ENCODE measurements at regions of chr5 and their contacts with region 1.

Region 1: GRCh38 chr5:38968665-38969064 is 105.5 kb downstream of the RICTOR start:
- DNase-seq: no peak
- ATAC-seq: no peak
- H3K4me3 ChIP-seq: no peak overlapping the region
- H3K27ac ChIP-seq: no peak overlapping the region
- H3K4me1 ChIP-seq: no peaks in the 10 kb centered on the region
- H3K27me3 ChIP-seq: no peaks in the 10 kb centered on the region
- CTCF ChIP-seq: no peak

Region 2: GRCh38 chr5:37391591-37391990 is 1577.1 kb before region 1 on chr5:
- CTCF ChIA-PET with region 1: no interaction called
- POLR2A ChIA-PET with region 1: interaction called, 10 read pairs
- in situ Hi-C with region 1: no loop called
- intact Hi-C with region 1: no loop called
- DNase-seq: no peak
- ATAC-seq: no peak
- H3K4me3 ChIP-seq: no peak overlapping the region
- H3K27ac ChIP-seq: no peak overlapping the region
- H3K4me1 ChIP-seq: no peaks in the 10 kb centered on the region
- H3K27me3 ChIP-seq: no peaks in the 10 kb centered on the region
- CTCF ChIP-seq: no peak

Region 3: DNA sequence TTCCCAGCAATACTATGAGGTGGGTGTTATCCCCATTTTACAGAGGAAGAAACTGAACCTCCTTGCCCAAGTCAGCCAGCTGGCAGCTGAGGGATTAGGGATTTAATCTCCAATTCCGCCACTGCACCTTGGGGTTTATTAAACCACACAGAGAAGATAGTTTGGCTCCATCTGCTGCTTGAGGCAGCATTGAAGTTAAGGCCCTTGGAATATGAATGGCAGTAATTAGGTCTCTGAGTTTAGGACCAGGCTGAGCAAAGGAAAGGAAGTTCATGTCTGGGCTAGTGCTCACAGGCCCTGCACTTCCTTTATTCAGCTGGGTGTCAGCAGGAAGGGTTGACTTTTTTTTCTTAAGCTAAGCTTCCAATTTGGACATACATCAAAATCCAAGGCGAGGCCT is 1041.9 kb before region 1 on chr5:
- CTCF ChIA-PET with region 1: no interaction called
- POLR2A ChIA-PET with region 1: no interaction called
- in situ Hi-C with region 1: no loop called
- intact Hi-C with region 1: no loop called
- DNase-seq: no peak
- ATAC-seq: no peak
- H3K4me3 ChIP-seq: no peak overlapping the region
- H3K27ac ChIP-seq: no peak overlapping the region
- H3K4me1 ChIP-seq: no peaks in the 10 kb centered on the region
- H3K27me3 ChIP-seq: peaks cover 12% of the 10 kb centered on the region
- CTCF ChIP-seq: no peak

Measured in Panc1 (cell line).